ENCODE measurements at regions of chr2 and their contacts with region 1.

Region 1: GRCh38 chr2:190408538-190409271 is 550 bp downstream of the MFSD6 start:
- DNase-seq: peak; percentile 72
- H3K4me3 ChIP-seq: peak overlapping the region; percentile 37 to 92 (median 91)
- H3K27ac ChIP-seq: peak overlapping the region; percentile 90 to 95 (median 94)
- H3K4me1 ChIP-seq: peaks cover 6 to 45% (median 16%) of the 10 kb centered on the region in 4 donors
- H3K27me3 ChIP-seq: no peaks in the 10 kb centered on the region
- CTCF ChIP-seq: peak in 1 of 5 experiments; percentile 23
- EP300 ChIP-seq: no peak
- POLR2A ChIP-seq: peak; percentile 71

Region 2: GRCh38 chr2:190486037-190486623 is 77.4 kb after region 1 on chr2:
- in situ Hi-C with region 1: no loop called
- intact Hi-C with region 1: loop called (anchors 10 kb)
- DNase-seq: no peak
- H3K4me3 ChIP-seq: no peak overlapping the region
- H3K27ac ChIP-seq: no peak overlapping the region
- H3K4me1 ChIP-seq: peaks cover 0 to 4% (median 0%) of the 10 kb centered on the region in 4 donors
- H3K27me3 ChIP-seq: no peaks in the 10 kb centered on the region
- CTCF ChIP-seq: no peak
- EP300 ChIP-seq: no peak
- POLR2A ChIP-seq: no peak